Activated B cell treated with CpG ODN at 0.5 μM for 24 hours (primary cell): ENCODE measurements at regions of chr19 and their contacts with region 1.

Region 1: GRCh38 chr19:16185123-16185767 is at the start of gene FAM32A:
- DNase-seq: peak; percentile 94
- ATAC-seq: peak; percentile 88
- H3K4me3 Mint-ChIP-seq: peak within 1 kb of the TSS; percentile 97
- H3K27ac Mint-ChIP-seq: peak within 1 kb of the TSS; percentile 93
- H3K4me1 Mint-ChIP-seq: peaks cover 35% of the 10 kb centered on the region
- H3K27me3 Mint-ChIP-seq: no peaks in the 10 kb centered on the region
- CTCF ChIP-seq: no peak
- total RNA-seq, gene FAM32A: 52.2 and 53.5 TPM in 2 replicates

Region 2: DNA sequence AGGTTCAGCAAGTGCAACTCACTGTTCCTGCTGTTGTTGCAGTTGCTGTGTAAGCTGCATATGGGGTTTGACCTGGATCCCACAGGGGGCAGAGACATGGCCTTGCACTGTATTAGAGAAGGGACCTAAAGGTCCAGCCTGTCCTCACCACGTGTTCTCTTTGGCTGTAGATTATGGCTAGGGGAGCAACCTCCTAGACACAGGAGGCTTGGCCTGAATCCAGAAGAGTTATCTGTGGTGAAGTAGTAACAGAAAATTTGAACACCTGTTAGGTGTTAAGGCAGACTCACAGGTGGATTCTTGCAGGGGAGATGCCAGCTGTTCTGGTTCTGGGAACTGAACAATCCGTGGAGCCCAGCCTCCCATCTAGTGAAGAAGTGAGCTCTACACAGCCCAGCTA is 247.5 kb before region 1 on chr19:
- CTCF ChIA-PET with region 1: no interaction called
- POLR2A ChIA-PET with region 1: no interaction called
- intact Hi-C with region 1: no loop called
- DNase-seq: no peak
- ATAC-seq: no peak
- H3K4me3 Mint-ChIP-seq: no peak overlapping the region
- H3K27ac Mint-ChIP-seq: no peak overlapping the region
- H3K4me1 Mint-ChIP-seq: peaks cover 9% of the 10 kb centered on the region
- H3K27me3 Mint-ChIP-seq: peaks cover 18% of the 10 kb centered on the region
- CTCF ChIP-seq: no peak

Region 3: DNA sequence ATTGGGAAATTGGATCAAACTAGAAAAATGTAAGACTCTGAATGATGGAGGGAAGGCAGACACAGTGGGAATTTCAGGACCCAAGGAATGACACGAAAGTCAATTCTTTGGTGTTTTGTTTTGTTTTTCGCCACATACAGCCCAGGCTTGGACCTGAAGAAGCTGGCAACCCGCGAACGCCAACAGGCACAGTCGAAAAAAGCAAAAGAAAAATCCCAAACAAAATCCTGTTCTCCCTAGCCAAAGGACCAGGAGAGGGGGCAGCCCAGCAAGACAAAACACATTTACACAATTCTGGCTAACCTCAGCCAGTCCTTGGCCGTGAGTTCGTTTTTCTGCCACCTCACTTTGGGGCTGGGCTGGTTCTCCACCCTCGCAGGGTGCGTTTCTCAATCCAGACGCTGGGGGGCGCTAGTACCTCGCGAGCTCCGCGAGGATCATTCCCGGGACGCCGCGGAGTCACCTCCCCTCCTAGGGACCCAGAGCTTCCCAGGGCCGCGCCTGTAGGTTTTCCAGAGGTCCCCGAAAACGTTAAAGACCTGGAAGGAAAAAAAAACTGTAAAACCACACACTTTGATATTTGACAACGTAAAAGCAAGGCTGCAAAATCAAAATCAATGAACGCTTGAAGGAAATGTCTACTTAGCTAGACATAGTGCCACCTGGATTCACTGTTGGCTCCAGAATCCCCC is 143.8 kb before region 1 on chr19:
- CTCF ChIA-PET with region 1: interaction called, 30 read pairs
- POLR2A ChIA-PET with region 1: interaction called, 10 read pairs
- intact Hi-C with region 1: loop called (anchors 1 kb)
- DNase-seq: peak; percentile 75
- ATAC-seq: peak; percentile 90
- H3K4me3 Mint-ChIP-seq: peak overlapping the region; percentile 19
- H3K27ac Mint-ChIP-seq: no peak overlapping the region
- H3K4me1 Mint-ChIP-seq: peaks cover 6% of the 10 kb centered on the region
- H3K27me3 Mint-ChIP-seq: peaks cover 2% of the 10 kb centered on the region
- CTCF ChIP-seq: peak; percentile 40

Region 4: GRCh38 chr19:16076154-16076957 is 108.9 kb before region 1 on chr19 and contains the start of gene TPM4:
- CTCF ChIA-PET with region 1: interaction called, 5 read pairs
- POLR2A ChIA-PET with region 1: interaction called, 24 read pairs
- intact Hi-C with region 1: no loop called
- DNase-seq: peak; percentile 77
- ATAC-seq: peak; percentile 53
- H3K4me3 Mint-ChIP-seq: peak within 1 kb of the TSS; percentile 90
- H3K27ac Mint-ChIP-seq: peak within 1 kb of the TSS; percentile 98
- H3K4me1 Mint-ChIP-seq: peaks cover 57% of the 10 kb centered on the region
- H3K27me3 Mint-ChIP-seq: no peaks in the 10 kb centered on the region
- CTCF ChIP-seq: no peak
- total RNA-seq, gene TPM4: 238 and 257 TPM in 2 replicates

Region 5: GRCh38 chr19:16143399-16144245 is 41.6 kb before region 1 on chr19 and contains the start of gene HSH2D:
- CTCF ChIA-PET with region 1: interaction called, 8 read pairs
- POLR2A ChIA-PET with region 1: interaction called, 19 read pairs
- intact Hi-C with region 1: loop called (anchors 1 kb)
- DNase-seq: peak; percentile 82
- ATAC-seq: peak; percentile 71
- H3K4me3 Mint-ChIP-seq: peak within 1 kb of the TSS; percentile 97
- H3K27ac Mint-ChIP-seq: peak within 1 kb of the TSS; percentile 99
- H3K4me1 Mint-ChIP-seq: peaks cover 94% of the 10 kb centered on the region
- H3K27me3 Mint-ChIP-seq: no peaks in the 10 kb centered on the region
- CTCF ChIP-seq: no peak
- total RNA-seq, gene HSH2D: 172 and 191 TPM in 2 replicates

Region 6: GRCh38 chr19:16197622-16198369 is 12.6 kb after region 1 on chr19 and contains the start of gene AP1M1:
- CTCF ChIA-PET with region 1: interaction called, 6 read pairs
- POLR2A ChIA-PET with region 1: interaction called, 25 read pairs
- intact Hi-C with region 1: loop called (anchors 1 kb)
- DNase-seq: peak; percentile 99
- ATAC-seq: peak; percentile 88
- H3K4me3 Mint-ChIP-seq: peak within 1 kb of the TSS; percentile 83
- H3K27ac Mint-ChIP-seq: peak within 1 kb of the TSS; percentile 97
- H3K4me1 Mint-ChIP-seq: peaks cover 39% of the 10 kb centered on the region
- H3K27me3 Mint-ChIP-seq: no peaks in the 10 kb centered on the region
- CTCF ChIP-seq: no peak
- total RNA-seq, gene AP1M1: 82.6 and 87.5 TPM in 2 replicates

Region 7: DNA sequence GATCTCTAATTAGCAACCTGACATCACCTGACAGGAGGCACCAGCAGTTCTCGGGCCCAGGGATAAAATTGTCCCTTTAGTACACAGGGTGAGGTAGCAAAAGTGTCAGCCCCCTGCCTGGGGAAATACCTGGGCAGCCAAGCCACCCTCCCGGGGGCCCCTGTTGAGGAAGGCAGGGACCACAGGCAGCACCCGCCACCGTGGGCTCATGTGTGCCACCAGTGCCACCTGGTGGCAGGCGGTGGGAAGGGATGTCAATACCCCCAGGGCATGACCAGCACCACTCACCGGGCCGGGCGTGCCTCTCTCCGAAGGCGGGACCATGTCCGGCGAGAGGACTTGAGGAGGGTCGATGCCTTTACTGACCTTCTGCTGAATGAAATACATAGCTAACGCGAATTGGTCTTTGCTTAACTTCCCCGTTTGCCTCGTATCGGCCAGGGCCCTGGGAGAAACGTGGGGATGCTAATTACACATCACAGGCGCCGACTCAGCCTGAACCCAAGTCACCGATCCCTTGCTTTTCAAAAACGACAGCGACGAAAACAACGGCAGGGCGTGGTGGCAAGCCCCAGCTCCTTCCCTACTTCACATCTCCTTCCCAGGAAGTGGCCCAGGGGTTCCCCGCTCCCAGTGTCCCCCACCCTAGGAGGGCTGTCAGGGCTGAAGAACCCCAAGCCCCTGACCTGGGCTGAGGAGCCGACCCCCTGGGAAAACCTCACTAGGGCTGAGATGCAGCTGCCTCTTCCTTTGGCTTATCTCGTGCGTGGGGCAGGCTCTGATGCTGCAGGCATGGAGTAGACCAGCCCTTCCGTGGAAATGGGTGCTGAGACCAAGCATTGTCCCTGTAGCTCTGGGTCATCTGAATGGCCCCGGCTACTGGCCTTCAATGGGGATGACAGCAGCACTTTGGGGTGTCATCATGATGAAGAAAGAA is 232.7 kb after region 1 on chr19:
- CTCF ChIA-PET with region 1: interaction called, 5 read pairs
- POLR2A ChIA-PET with region 1: interaction called, 9 read pairs
- intact Hi-C with region 1: loop called (anchors 1 kb)
- DNase-seq: peak; percentile 80
- ATAC-seq: peak; percentile 92
- H3K4me3 Mint-ChIP-seq: peak overlapping the region; percentile 61
- H3K27ac Mint-ChIP-seq: peak overlapping the region; percentile 83
- H3K4me1 Mint-ChIP-seq: peaks cover 37% of the 10 kb centered on the region
- H3K27me3 Mint-ChIP-seq: no peaks in the 10 kb centered on the region
- CTCF ChIP-seq: peak; percentile 87